CD4-positive, alpha-beta T cell (primary cell): ENCODE measurements at regions of chr15 and their contacts with region 1.

Region 1: GRCh38 chr15:95259965-95260364 is 1028.6 kb downstream of the MCTP2 start:
- DNase-seq: no peak
- ATAC-seq: no peak
- H3K4me3 ChIP-seq: no peak overlapping the region
- H3K4me3 Mint-ChIP-seq: no peak overlapping the region
- H3K27ac ChIP-seq: no peak overlapping the region
- H3K27ac Mint-ChIP-seq: no peak overlapping the region
- H3K4me1 ChIP-seq: no peaks in the 10 kb centered on the region
- H3K4me1 Mint-ChIP-seq: no peaks in the 10 kb centered on the region
- H3K27me3 ChIP-seq: peaks cover 0 to 6% of the 10 kb centered on the region in 2 experiments
- H3K27me3 Mint-ChIP-seq: peaks cover 38% of the 10 kb centered on the region
- CTCF ChIP-seq: no peak

Region 2: GRCh38 chr15:95291898-95292472 is 32.0 kb after region 1 on chr15:
- CTCF ChIA-PET with region 1: no interaction called
- POLR2A ChIA-PET with region 1: no interaction called
- intact Hi-C with region 1: no loop called
- DNase-seq: peak in 3 of 14 experiments; percentile 30 to 32 (median 31)
- ATAC-seq: no peak
- H3K4me3 ChIP-seq: no peak overlapping the region
- H3K4me3 Mint-ChIP-seq: no peak overlapping the region
- H3K27ac ChIP-seq: no peak overlapping the region
- H3K27ac Mint-ChIP-seq: no peak overlapping the region
- H3K4me1 ChIP-seq: no peaks in the 10 kb centered on the region
- H3K4me1 Mint-ChIP-seq: no peaks in the 10 kb centered on the region
- H3K27me3 ChIP-seq: peaks cover 0 to 19% of the 10 kb centered on the region in 2 experiments
- H3K27me3 Mint-ChIP-seq: peaks cover 57% of the 10 kb centered on the region
- CTCF ChIP-seq: peak; percentile 58

Region 3: GRCh38 chr15:97234851-97235610 is 1975.1 kb after region 1 on chr15:
- CTCF ChIA-PET with region 1: no interaction called
- POLR2A ChIA-PET with region 1: no interaction called
- intact Hi-C with region 1: loop called in 1 of 2 experiments (anchors 2 kb)
- DNase-seq: peak in 7 of 14 experiments; percentile 3 to 36 (median 9)
- ATAC-seq: no peak
- H3K4me3 ChIP-seq: no peak overlapping the region
- H3K4me3 Mint-ChIP-seq: no peak overlapping the region
- H3K27ac ChIP-seq: no peak overlapping the region
- H3K27ac Mint-ChIP-seq: no peak overlapping the region
- H3K4me1 ChIP-seq: no peaks in the 10 kb centered on the region
- H3K4me1 Mint-ChIP-seq: no peaks in the 10 kb centered on the region
- H3K27me3 ChIP-seq: no peaks in the 10 kb centered on the region
- H3K27me3 Mint-ChIP-seq: no peaks in the 10 kb centered on the region
- CTCF ChIP-seq: peak; percentile 46